Common myeloid progenitor, CD34-positive (primary cell): ENCODE measurements at regions of chr11 and their contacts with region 1.

Region 1: DNA sequence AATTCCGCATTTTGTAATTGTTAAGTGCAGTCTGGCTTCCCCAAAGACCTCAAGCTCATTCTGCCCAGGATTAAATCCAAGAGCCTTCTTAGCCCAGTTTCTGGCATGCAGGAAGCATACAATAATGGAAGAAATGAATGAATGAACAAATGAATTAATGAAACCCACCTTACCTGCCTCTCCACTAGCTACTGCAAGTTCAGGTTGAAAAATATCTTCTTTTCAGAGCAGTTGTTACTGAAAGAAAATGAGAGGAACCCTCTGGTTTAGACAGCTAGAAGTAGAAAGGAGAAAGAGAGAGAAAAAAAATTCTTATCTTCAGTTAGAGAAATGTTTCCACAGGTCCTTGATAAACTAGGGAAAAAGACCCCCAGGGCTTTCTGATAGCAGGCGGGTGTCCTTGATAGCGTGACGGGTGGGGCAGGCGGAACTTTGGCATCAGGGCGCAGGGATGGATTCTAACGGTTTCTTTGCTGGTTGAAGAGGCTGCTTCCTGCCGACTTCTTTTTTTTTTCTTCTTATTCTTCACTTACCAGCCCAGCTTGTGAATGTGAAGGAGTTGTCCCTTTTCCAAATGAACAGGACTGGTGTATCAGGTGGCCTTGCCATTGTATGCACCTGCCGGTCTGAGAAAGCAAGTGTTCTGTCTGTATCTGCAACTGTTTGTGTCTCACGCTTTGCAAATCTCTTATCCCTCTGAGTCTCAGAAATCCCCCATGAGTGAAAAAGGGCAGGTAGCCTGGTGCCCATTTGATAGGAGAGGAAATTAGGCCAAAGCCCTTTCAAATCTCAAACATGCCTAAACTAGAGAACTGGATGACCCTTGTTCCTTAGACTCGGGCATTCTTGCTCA is 10.0 kb downstream of the LMO2 start:
- DNase-seq: peak in 2 of 3 donors; percentile 44 to 60
- H3K4me3 ChIP-seq: peak overlapping the region in 6 of 7 experiments; percentile 46 to 90 (median 59)
- H3K27ac ChIP-seq: peak overlapping the region; percentile 80 to 91
- H3K4me1 ChIP-seq: peaks cover 31 to 93% (median 75%) of the 10 kb centered on the region in 4 experiments
- H3K27me3 ChIP-seq: no peaks in the 10 kb centered on the region

Region 2: DNA sequence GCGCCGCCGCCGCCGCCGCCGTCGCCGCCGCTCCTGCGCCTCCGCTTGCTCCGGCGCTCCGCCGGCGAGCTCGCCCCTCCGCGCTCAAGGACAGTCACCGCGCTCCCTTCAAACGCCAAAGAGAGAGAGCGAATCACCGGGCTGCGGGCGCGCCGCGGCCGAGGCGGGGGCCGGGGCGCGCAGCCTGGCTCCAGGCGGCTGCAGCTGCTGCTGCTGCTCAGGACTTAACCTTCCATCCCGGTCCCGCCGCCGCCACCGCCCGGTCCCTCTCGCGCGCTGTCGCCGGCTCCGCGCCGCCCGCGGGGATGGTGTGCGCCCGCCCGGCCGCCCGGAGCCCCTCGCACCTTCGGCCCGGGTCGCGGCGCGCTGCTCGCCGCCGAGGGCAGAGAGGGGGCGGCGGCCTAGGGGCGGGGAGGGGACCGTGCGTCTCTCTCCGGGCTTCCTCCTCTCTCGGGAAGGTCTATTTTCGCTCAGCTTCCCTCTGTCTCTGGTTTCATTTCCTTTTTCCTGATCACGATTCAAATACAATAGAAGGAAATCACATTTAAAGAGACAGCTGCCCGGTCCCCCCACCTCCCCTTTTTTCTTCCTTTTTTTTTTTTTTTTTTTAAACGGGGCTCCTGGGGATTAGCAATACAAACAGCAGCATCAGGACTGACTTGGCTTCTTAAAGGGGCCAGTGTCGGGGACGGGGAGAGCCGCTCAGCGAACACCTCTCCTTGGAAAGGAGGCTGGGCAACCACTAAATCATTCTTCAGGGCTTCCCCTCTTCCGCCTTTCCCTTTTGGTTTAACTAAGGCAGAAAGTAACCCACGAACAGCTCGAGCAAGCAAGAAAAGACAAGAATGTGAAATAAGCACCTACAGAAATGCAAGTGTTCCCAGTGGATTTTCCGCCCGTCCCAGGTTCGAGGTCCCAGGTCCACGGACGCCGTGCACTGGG is 12.1 kb before region 1 on chr11:
- CTCF ChIA-PET with region 1: interaction called, 82 read pairs
- POLR2A ChIA-PET with region 1: interaction called, 3 read pairs
- DNase-seq: peak; percentile 67 to 88 (median 88)
- H3K4me3 ChIP-seq: peak overlapping the region; percentile 66 to 94 (median 89)
- H3K27ac ChIP-seq: peak overlapping the region; percentile 72 to 91
- H3K4me1 ChIP-seq: peaks cover 37 to 78% (median 65%) of the 10 kb centered on the region in 4 experiments
- H3K27me3 ChIP-seq: no peaks in the 10 kb centered on the region